Activated CD4-positive, alpha-beta memory T cell treated with anti-CD3 and anti-CD28 coated beads, Interleukin-2, amount 10 ng/mL, durations not matched to agents 7 days and 5 days (primary cell): ENCODE measurements at regions of chr15 and their contacts with region 1.

Region 1: DNA sequence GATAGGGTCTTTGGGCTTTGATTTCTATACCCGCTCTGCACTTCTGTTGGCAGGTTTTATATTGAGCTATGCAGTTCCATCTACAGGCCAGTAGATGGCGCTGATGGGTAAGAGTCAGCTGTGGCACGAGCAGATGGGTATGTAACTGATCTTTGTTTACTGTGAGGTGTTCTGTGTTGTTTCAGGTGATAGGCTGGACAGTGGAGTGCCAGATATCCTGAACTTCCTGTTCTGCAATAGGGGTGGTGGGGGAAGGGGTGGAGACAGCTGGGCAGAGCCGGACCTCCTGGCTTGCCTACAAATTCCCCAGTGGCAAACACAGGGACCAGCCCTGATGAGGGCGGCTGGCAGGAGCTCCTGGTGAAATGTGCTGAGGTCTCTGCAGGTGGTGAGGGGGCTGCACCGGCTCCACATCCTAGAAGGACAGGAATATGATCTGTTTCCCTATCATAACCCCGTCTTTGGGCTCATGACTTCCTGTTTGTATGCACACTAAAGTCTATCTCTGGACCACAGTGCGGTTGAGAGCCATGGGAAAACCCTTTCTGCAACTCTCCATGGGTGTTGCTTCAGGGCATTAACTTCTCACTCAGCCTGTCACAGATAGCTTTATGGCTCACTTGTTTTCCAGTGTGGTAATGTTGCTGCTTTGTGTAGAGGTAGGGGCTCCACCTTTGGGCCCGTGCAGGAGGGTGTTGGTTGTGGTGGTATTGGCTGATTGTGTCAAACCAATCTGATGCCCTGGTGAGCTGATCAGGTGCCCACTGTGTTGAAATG is 13.4 kb upstream of the FAM98B start:
- DNase-seq: peak; percentile 60
- H3K4me3 Mint-ChIP-seq: no peak overlapping the region
- H3K27ac Mint-ChIP-seq: no peak overlapping the region
- H3K4me1 Mint-ChIP-seq: peaks cover 11% of the 10 kb centered on the region
- H3K27me3 Mint-ChIP-seq: peaks cover 41% of the 10 kb centered on the region

Region 2: GRCh38 chr15:38453971-38454695 is 13.6 kb after region 1 on chr15 and contains the start of gene FAM98B:
- CTCF ChIA-PET with region 1: interaction called, 41 read pairs
- POLR2A ChIA-PET with region 1: interaction called, 28 read pairs
- DNase-seq: peak; percentile 89
- H3K4me3 Mint-ChIP-seq: peak within 1 kb of the TSS; percentile 93
- H3K27ac Mint-ChIP-seq: peak within 1 kb of the TSS; percentile 84
- H3K4me1 Mint-ChIP-seq: peaks cover 35% of the 10 kb centered on the region
- H3K27me3 Mint-ChIP-seq: peaks cover 14% of the 10 kb centered on the region
- total RNA-seq, gene FAM98B: 33.2 to 35.3 TPM

Region 3: GRCh38 chr15:38474155-38474757 is 33.7 kb after region 1 on chr15:
- CTCF ChIA-PET with region 1: interaction called, 14 read pairs
- POLR2A ChIA-PET with region 1: interaction called, 4 read pairs
- DNase-seq: peak; percentile 40
- H3K4me3 Mint-ChIP-seq: no peak overlapping the region
- H3K27ac Mint-ChIP-seq: peak overlapping the region; percentile 32
- H3K4me1 Mint-ChIP-seq: peaks cover 4% of the 10 kb centered on the region
- H3K27me3 Mint-ChIP-seq: no peaks in the 10 kb centered on the region

Region 4: DNA sequence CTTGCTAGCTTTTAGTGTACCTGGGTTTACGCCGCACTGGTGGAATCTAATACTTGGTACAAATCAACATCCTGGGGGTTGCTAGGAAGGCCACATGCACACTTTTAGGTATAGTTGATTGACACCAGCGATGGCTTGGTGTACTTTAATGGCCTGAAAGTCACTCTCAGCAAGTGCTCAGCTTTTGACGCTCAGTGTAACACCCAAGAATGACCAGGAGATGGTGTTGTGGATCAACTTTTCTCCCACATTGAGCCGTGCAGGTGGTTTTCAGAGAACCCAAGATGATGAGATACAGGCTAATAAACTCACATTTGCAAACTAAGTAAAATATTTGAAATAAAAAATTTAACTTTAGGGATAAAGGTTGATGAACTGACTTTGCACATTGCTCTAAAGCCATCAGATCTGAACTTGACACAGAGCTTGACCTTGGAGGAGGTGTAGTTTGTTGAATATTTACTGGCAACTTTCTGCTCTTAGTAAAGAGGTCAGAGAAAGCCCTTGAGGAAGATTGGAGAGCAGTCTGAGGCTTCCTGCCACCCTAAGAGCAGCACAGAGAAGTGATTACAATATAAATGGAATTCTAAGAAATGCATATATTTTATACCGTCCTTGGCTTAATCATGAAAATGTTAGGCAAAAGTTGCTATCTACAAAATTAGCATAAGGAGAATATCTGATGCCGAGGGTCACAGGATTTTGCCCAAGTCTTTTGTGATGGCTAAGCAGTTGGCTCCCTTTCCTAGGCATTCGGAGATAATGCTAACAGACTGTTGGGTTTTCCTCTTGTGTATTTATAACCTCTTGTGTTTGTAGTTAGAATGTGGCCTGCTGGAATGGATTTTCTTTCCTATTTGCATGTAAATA is 267.5 kb after region 1 on chr15:
- CTCF ChIA-PET with region 1: interaction called, 15 read pairs
- POLR2A ChIA-PET with region 1: no interaction called
- DNase-seq: peak; percentile 40
- H3K4me3 Mint-ChIP-seq: no peak overlapping the region
- H3K27ac Mint-ChIP-seq: no peak overlapping the region
- H3K4me1 Mint-ChIP-seq: peaks cover 33% of the 10 kb centered on the region
- H3K27me3 Mint-ChIP-seq: no peaks in the 10 kb centered on the region